Common myeloid progenitor, CD34-positive (primary cell): ENCODE measurements at regions of chr6 and their contacts with region 1.

Region 1: GRCh38 chr6:44265007-44265721 is at the start of gene NFKBIE:
- DNase-seq: peak in 1 of 3 donors; percentile 91
- H3K4me3 ChIP-seq: peak within 1 kb of the TSS; percentile 70 to 91 (median 85)
- H3K27ac ChIP-seq: peak within 1 kb of the TSS; percentile 86 to 92
- H3K4me1 ChIP-seq: peaks cover 8 to 46% (median 39%) of the 10 kb centered on the region in 4 experiments
- H3K27me3 ChIP-seq: peaks cover 3 to 20% (median 10%) of the 10 kb centered on the region in 5 experiments

Region 2: GRCh38 chr6:44211284-44211683 is 53.9 kb before region 1 on chr6:
- CTCF ChIA-PET with region 1: no interaction called
- POLR2A ChIA-PET with region 1: no interaction called
- DNase-seq: no peak
- H3K4me3 ChIP-seq: no peak overlapping the region
- H3K27ac ChIP-seq: no peak overlapping the region
- H3K4me1 ChIP-seq: peaks cover 0 to 14% (median 7%) of the 10 kb centered on the region in 4 experiments
- H3K27me3 ChIP-seq: no peaks in the 10 kb centered on the region

Region 3: GRCh38 chr6:44251576-44252524 is 13.3 kb before region 1 on chr6:
- CTCF ChIA-PET with region 1: interaction called, 10 read pairs
- POLR2A ChIA-PET with region 1: interaction called, 40 read pairs
- DNase-seq: no peak
- H3K4me3 ChIP-seq: no peak overlapping the region
- H3K27ac ChIP-seq: no peak overlapping the region
- H3K4me1 ChIP-seq: peaks cover 17 to 53% (median 42%) of the 10 kb centered on the region in 4 experiments
- H3K27me3 ChIP-seq: no peaks in the 10 kb centered on the region

Region 4: GRCh38 chr6:44294832-44295791 is 29.9 kb after region 1 on chr6:
- CTCF ChIA-PET with region 1: interaction called, 202 read pairs
- POLR2A ChIA-PET with region 1: no interaction called
- DNase-seq: no peak
- H3K4me3 ChIP-seq: no peak overlapping the region
- H3K27ac ChIP-seq: no peak overlapping the region
- H3K4me1 ChIP-seq: peaks cover 0 to 12% (median 11%) of the 10 kb centered on the region in 4 experiments
- H3K27me3 ChIP-seq: peaks cover 2 to 85% (median 36%) of the 10 kb centered on the region in 5 experiments

Region 5: GRCh38 chr6:44312901-44313788 is 48.0 kb after region 1 on chr6 and contains the start of gene AARS2:
- CTCF ChIA-PET with region 1: interaction called, 202 read pairs
- POLR2A ChIA-PET with region 1: interaction called, 4 read pairs
- DNase-seq: peak; percentile 88 to 93 (median 91)
- H3K4me3 ChIP-seq: peak within 1 kb of the TSS; percentile 84 to 99 (median 93)
- H3K27ac ChIP-seq: peak within 1 kb of the TSS; percentile 37 to 80
- H3K4me1 ChIP-seq: peaks cover 3 to 11% (median 7%) of the 10 kb centered on the region in 4 experiments
- H3K27me3 ChIP-seq: peaks cover 0 to 4% (median 2%) of the 10 kb centered on the region in 5 experiments

Region 6: GRCh38 chr6:44338228-44339122 is 73.3 kb after region 1 on chr6:
- CTCF ChIA-PET with region 1: interaction called, 76 read pairs
- POLR2A ChIA-PET with region 1: no interaction called
- DNase-seq: peak; percentile 66 to 81 (median 74)
- H3K4me3 ChIP-seq: no peak overlapping the region
- H3K27ac ChIP-seq: no peak overlapping the region
- H3K4me1 ChIP-seq: peaks cover 0 to 16% (median 11%) of the 10 kb centered on the region in 4 experiments
- H3K27me3 ChIP-seq: peaks cover 0 to 16% (median 13%) of the 10 kb centered on the region in 5 experiments